WTC11 (cell line): ENCODE measurements at regions of chr16 and their contacts with region 1.

Region 1: DNA sequence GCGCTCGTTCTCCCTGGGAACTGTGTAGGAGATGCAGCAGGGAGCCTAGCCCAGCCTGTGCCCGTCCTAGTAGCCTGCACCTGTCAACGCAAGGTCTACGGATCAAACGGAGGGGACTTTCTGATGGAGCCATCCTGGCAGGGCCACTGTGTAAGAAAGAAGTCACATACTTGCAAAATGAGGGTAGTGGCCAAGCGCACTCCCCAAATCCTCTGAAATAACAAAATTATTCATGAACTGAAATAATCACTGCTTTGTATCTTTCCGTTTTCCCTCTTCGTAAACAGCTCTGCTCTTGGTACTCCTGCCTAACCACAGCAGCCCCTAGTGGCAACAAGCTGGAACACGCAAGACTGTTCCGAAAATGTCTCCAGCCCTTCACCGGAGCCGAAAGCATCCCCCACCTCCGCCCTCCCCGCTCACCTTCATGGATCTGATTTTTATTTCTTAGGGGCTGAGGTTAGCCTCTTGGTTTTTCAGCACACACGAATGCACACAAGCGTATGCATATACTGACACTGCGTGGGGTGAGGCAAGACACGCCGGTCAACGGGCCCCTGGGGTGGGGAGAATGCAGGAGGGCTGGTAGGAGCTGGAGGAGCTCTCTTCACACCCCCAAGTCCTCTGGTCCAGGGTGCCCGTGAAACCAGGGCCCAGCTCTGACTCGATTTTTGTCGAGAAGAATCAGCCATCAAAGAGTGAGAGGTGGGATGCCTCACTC is 100.8 kb downstream of the ABCC12 start:
- DNase-seq: peak; percentile 66
- ATAC-seq: peak; percentile 87
- H3K4me3 Mint-ChIP-seq: peak overlapping the region; percentile 47
- H3K27ac Mint-ChIP-seq: no peak overlapping the region; the same call in 1 of the 2 replicates
- H3K4me1 Mint-ChIP-seq: peaks cover 45% of the 10 kb centered on the region
- H3K27me3 Mint-ChIP-seq: peaks cover 3% of the 10 kb centered on the region; the same call in 1 of the 2 replicates
- CTCF ChIP-seq: peak; percentile 64

Region 2: GRCh38 chr16:47858333-47858982 is 196.6 kb before region 1 on chr16:
- CTCF ChIA-PET with region 1: no interaction called
- POLR2A ChIA-PET with region 1: no interaction called
- DNase-seq: no peak
- ATAC-seq: no peak
- H3K4me3 Mint-ChIP-seq: no peak overlapping the region
- H3K27ac Mint-ChIP-seq: no peak overlapping the region
- H3K4me1 Mint-ChIP-seq: no peaks in the 10 kb centered on the region
- H3K27me3 Mint-ChIP-seq: peaks cover 8% of the 10 kb centered on the region; the same call in 1 of the 2 replicates
- CTCF ChIP-seq: no peak

Region 3: GRCh38 chr16:47978491-47979163 is 76.4 kb before region 1 on chr16:
- CTCF ChIA-PET with region 1: interaction called, 12 read pairs
- POLR2A ChIA-PET with region 1: no interaction called
- DNase-seq: no peak
- ATAC-seq: no peak
- H3K4me3 Mint-ChIP-seq: no peak overlapping the region
- H3K27ac Mint-ChIP-seq: no peak overlapping the region
- H3K4me1 Mint-ChIP-seq: peaks cover 6% of the 10 kb centered on the region
- H3K27me3 Mint-ChIP-seq: no peaks in the 10 kb centered on the region
- CTCF ChIP-seq: no peak

Region 4: DNA sequence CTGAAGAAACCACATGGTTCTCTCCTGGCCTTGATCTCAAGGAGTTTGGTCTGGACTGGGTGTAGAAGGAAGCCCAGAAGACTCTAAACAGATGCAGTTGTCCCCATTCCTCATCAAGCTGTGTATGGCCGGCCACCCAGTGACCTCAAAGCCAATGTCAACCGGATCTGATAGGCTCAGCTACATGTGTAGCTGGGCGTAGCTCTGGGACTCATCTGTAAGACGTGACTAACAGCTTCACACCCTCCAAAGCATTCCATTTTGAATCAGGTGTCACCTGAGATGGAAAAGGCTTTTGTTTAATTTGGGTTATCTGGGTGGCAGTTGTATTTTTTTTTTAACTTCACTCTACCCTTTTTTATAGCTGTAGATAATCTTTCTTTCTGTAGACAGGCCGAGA is 29.7 kb before region 1 on chr16:
- CTCF ChIA-PET with region 1: interaction called, 12 read pairs
- POLR2A ChIA-PET with region 1: no interaction called
- DNase-seq: no peak
- ATAC-seq: no peak
- H3K4me3 Mint-ChIP-seq: no peak overlapping the region
- H3K27ac Mint-ChIP-seq: no peak overlapping the region
- H3K4me1 Mint-ChIP-seq: peaks cover 19% of the 10 kb centered on the region
- H3K27me3 Mint-ChIP-seq: no peaks in the 10 kb centered on the region
- CTCF ChIP-seq: no peak